OCI-LY7 (cell line): ENCODE measurements at regions of chr2 and their contacts with region 1.

Region 1: DNA sequence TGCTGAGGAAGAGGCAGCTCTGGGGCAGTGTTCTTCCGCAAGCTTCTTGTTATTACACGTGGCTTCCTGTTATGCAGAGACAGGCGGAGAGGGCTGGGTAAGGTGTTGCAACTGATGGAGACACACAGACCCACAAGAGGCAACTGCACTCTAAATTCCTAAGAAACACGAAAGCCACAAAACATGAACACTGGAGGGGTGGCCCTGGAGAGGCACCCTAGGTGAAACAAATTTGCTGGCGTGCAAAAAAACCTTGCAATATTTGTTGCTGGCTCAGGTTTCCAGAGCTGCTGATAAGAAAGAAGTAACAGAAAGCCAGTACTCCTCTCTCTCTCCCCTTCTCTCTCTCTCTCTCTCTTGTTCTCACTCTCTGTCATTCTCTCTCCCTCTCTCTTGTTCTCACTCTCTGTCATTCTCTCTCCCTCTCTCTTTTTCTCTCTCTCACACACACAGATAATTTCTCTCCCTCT is 31.8 kb downstream of the ARHGAP25 start:
- DNase-seq: peak; percentile 84
- H3K4me3 ChIP-seq: peak overlapping the region; percentile 67
- H3K27ac ChIP-seq: peak overlapping the region; percentile 93
- H3K4me1 ChIP-seq: peaks cover 100% of the 10 kb centered on the region
- CTCF ChIP-seq: no peak; the same call in 1 of the 2 replicates

Region 2: DNA sequence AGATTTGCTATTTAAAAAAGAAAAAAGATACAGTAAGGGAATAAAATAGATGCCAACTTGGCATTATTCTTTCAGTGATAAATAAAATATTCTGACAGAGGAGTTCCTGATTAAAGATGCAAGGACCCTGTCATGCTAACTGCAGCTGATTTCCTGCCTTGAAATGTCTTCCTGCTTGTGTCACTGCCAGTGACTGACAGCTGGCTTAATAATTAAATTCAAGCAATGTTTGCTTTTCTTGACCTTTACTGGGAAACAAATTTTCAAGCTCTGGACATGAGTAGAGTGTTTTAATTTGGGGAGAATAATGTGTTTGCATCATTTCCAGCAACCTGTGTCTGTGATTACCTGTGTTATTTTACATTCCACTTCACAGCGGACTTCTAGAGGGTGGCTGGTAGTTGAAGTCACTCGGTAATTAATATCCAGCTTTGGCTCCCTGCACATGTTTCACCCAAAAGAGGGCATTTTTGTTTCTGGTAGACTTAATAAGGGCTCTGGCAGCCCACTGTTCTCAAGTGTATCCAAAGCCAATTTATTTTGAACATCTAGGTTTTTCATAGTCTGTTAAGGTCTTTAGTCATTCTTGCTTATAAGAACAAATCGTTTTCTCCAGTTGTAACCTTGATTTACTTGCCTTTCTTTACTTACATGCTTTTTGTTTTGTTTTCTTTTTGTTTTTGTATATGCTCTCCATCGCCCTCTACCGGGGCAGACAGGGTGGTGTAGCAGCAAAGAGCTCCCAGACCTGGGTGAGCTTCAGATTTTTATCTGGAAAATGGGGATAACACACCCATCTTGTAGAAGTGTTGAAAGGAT is 171.5 kb before region 1 on chr2:
- CTCF ChIA-PET with region 1: no interaction called
- POLR2A ChIA-PET with region 1: no interaction called
- intact Hi-C with region 1: no loop called
- DNase-seq: peak; percentile 57
- H3K4me3 ChIP-seq: no peak overlapping the region
- H3K27ac ChIP-seq: no peak overlapping the region
- H3K4me1 ChIP-seq: peaks cover 15% of the 10 kb centered on the region
- CTCF ChIP-seq: peak; percentile 98

Region 3: DNA sequence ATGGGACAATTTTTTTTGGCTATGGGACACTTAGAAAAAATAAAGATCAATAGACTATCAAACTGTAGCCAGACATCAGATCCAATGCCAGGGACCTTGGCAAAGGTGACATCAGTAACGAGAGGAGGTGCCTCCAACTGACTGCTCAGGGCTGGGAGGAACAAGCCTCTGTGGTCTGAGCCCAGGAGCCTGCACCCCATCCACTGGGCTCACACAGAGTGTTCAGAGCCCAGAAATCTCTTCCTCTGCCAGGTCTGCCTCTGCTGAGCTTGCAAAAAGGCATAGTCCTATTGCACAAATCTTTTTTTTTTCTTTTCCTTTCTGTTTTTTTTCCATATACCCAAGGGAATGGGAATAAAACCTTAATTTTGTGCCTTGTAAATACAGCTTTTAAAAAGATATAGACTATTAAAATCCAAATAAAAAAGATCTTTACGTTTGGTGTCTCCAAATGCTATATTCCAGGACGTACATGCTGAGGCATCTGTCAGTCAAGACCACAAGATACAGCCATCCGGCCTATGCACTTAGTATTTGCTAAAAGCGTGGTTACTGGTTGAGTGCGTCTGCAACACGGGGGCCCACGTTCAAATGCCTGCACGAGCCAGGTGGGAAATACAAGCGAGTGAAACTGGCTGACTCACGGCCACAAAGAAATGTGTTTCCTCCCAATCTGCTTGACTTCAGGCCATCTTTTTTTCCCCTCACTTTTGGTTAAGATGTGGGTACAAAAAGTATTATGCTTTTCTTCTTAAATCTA is 39.6 kb before region 1 on chr2:
- CTCF ChIA-PET with region 1: interaction called, 5 read pairs
- POLR2A ChIA-PET with region 1: interaction called, 8 read pairs
- intact Hi-C with region 1: loop called (anchors 2 kb)
- DNase-seq: peak; percentile 94
- H3K4me3 ChIP-seq: peak overlapping the region; percentile 39
- H3K27ac ChIP-seq: peak overlapping the region; percentile 66
- H3K4me1 ChIP-seq: peaks cover 68% of the 10 kb centered on the region
- CTCF ChIP-seq: no peak

Region 4: DNA sequence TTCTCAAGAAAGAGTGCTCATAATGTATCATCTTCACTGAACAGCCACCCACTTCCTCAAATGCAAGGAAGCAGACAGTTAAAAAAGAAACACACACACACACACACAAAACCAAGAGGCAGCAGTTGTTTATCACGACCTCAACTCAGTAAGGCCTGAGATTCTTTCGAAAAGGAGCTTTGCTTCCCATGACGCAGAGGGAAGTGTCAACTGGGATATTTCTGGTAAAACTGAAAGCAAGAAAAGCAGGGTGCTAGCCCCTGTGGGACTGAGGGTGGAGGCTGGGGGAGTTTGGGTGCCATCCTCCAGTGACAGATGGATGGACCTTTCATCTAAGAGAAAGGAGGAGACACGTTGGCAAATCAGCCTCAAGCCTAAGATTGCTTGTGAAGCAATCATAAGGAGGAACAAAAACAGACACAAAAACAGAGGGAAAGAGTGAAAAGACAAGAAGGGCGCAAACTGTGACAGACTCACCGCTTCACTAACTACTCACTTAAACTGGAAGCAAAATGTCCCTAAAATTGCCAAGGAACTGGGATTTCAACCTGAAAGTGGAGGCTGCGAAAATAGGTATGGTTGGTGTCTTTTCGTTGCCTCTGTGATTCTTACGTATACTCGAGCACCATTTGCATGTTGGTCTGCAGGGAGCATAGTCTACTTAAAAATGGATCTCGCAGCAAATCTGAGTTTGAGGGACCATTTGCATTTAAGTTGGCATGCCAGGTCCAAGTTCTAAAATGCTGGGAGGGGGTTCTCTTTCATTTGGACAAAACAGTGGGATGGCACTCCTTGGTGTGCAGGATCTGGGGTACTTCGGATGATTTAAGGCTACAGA is 31.5 kb before region 1 on chr2 and contains the start of gene ARHGAP25:
- CTCF ChIA-PET with region 1: interaction called, 3 read pairs
- POLR2A ChIA-PET with region 1: interaction called, 9 read pairs
- intact Hi-C with region 1: loop called (anchors 1 kb)
- DNase-seq: peak; percentile 85
- H3K4me3 ChIP-seq: peak within 1 kb of the TSS; percentile 73
- H3K27ac ChIP-seq: peak within 1 kb of the TSS; percentile 94
- H3K4me1 ChIP-seq: peaks cover 55% of the 10 kb centered on the region
- CTCF ChIP-seq: no peak
- total RNA-seq, gene ARHGAP25: 18.6 and 22.3 TPM in 2 replicates

Region 5: DNA sequence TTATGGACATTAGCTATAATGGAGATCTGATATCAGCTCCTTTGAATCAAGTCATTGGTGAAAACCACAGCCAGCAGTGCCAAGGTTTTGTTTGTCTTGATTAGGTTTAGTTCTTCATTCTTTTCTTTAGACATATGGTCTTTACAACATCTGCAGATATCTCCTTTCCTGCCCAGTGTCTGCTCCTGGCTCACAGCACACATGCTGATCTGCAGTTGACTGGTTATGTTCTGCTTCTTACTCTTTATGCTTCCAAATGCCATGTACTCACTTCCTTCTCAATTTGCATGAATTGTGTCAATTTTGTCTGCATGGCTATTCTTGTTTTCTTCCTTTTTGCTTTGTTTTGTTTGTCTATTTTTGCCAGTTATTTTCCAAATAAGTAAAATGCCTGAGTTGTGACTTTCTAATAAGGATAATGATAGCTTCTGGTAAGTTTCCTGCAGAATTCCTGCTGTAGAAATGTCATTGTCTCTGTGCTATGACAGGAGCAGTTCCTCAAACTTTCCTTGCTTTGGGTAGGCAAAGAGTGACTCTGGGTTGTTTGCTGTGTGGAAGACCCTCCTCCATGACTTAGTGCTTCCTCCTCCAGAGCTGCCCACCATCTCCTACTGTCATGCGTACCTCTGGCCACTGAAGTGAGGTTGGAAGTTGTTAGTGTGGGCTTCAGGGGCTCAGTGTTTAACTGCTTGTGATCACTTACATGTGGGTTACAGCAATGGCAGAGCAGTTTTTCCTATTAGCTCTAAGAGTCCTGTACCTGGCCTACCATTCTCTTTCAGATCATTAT is 23.6 kb before region 1 on chr2:
- CTCF ChIA-PET with region 1: interaction called, 3 read pairs
- POLR2A ChIA-PET with region 1: interaction called, 11 read pairs
- intact Hi-C with region 1: no loop called
- DNase-seq: peak; percentile 64
- H3K4me3 ChIP-seq: peak overlapping the region; percentile 24
- H3K27ac ChIP-seq: peak overlapping the region; percentile 54
- H3K4me1 ChIP-seq: peaks cover 86% of the 10 kb centered on the region
- CTCF ChIP-seq: no peak

Region 6: DNA sequence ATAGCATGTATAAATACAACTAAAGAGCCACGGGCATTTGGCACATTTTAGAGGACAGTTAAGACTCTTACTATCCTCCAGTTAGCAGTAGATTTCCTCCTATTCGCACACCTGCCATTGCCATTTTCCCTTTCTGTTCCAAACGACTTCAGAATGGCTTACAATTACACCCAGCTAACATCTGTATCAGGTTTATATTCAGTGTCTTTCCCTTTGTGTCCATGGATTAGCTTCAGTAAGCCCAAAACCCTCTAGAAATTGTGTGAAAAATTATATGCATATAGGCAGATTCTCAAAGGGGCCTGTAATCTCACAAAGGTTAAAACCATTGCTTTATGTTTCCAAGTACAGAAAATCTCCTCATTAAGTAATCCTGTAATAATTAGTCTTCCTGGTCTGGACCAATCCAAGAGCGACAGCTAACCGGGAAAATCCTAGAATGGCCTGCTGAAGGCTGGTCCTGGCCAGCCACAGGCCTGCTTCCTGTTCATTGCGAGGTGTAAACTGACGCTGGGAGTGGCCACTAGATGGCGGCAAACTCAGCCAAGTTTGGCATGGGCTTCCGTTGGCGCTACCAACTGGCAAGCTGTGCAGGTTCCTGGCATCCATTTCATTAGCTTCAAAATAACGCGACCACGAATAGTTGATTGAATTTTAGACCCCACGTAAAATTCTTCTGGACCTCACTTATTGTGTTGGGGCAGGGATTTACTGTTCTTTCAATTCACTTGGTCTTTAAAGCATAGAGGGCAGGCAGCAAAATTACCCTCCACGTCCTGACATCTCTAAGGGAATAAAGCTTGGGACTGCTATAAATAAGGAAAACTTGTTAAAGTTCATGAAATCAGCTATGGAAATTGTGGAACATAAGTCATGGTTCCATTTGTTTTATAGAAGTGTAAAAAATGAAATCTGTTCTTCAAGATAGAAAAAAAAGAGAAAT is 14.7 kb before region 1 on chr2:
- CTCF ChIA-PET with region 1: interaction called, 9 read pairs
- POLR2A ChIA-PET with region 1: interaction called, 14 read pairs
- intact Hi-C with region 1: loop called (anchors 2 kb)
- DNase-seq: peak; percentile 93
- H3K4me3 ChIP-seq: no peak overlapping the region
- H3K27ac ChIP-seq: peak overlapping the region; percentile 3
- H3K4me1 ChIP-seq: peaks cover 43% of the 10 kb centered on the region
- CTCF ChIP-seq: peak; percentile 98

Region 7: GRCh38 chr2:68789603-68790002 is 23.2 kb after region 1 on chr2:
- CTCF ChIA-PET with region 1: interaction called, 5 read pairs
- POLR2A ChIA-PET with region 1: interaction called, 14 read pairs
- intact Hi-C with region 1: loop called (anchors 1 kb)
- DNase-seq: peak; percentile 93
- H3K4me3 ChIP-seq: peak overlapping the region; percentile 3
- H3K27ac ChIP-seq: peak overlapping the region; percentile 76
- H3K4me1 ChIP-seq: peaks cover 55% of the 10 kb centered on the region
- CTCF ChIP-seq: no peak

Region 8: GRCh38 chr2:68807821-68808266 is 41.4 kb after region 1 on chr2:
- CTCF ChIA-PET with region 1: no interaction called
- POLR2A ChIA-PET with region 1: no interaction called
- intact Hi-C with region 1: no loop called
- DNase-seq: no peak
- H3K4me3 ChIP-seq: no peak overlapping the region
- H3K27ac ChIP-seq: no peak overlapping the region
- H3K4me1 ChIP-seq: no peaks in the 10 kb centered on the region
- CTCF ChIP-seq: no peak

Region 9: DNA sequence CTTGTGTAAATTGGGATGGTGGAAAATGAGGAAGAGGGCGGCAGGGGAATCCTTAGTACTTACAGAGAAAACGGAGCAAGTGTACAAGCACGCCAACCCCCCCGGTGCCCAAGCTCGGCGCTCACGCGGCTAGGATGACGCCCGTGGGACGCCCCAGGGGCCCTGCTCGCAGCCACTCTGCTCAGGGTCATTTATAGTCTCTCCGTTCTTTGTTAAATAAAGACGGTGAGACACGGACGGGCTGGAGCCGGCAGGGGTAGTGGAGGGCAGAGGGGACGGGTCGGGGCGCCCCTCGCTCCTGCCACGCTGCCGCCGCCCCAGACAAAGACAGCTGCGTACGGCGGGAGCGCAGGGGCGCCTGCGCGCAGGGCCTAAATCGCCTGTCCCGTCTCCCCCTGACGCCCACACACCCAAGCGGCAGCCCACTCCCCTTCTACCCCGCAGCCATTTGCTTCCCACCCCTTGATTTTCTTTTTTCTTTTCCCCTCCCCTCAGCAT is 1358.6 kb after region 1 on chr2:
- CTCF ChIA-PET with region 1: no interaction called
- POLR2A ChIA-PET with region 1: no interaction called
- intact Hi-C with region 1: loop called (anchors 10 kb)
- DNase-seq: peak; percentile 65
- H3K4me3 ChIP-seq: peak overlapping the region; percentile 63
- H3K27ac ChIP-seq: peak overlapping the region; percentile 83
- H3K4me1 ChIP-seq: peaks cover 89% of the 10 kb centered on the region
- CTCF ChIP-seq: no peak